Adrenal gland (tissue), 19 donors: ENCODE measurements at regions of chr3 and their contacts with region 1.

Region 1: DNA sequence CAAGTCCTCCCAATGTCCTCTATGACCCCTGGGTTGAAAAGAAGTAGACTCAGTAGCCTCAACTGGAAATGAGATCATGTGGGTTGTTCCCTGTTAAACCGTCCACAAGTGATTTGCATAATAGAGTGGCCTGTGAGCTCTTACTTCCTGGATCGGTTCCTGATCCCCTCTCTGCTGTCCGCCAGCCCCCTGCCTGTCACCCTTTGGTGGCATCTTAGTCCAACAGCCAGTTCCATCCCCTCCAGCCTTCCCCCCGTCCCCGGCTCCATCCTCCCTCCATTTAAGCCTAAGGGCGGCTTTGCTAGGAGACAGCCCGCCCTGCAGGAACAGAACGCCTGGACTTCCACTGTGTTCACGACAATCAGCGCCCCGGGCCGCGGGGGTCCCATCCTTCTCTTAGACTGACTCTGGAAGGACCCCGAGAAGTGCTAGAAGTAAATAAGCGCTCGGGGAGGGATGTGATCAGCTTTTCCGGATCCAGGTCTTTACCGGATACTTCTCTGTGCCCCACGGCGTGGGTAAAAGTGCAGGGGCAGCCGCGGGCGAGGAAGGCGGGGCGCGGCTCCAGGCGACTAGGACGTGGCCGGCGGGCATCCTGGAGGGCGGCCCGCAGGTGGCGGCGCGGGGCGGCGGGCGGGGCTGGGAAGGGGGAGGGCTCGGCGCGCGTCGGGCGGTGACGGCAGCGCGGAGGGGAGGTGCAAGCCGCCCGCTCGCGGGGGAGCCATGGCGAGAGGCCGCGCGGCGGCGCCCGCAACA is 51.2 kb upstream of the ULK4 start:
- DNase-seq: peak; percentile 53 to 78 (median 65)
- H3K4me3 ChIP-seq: peak overlapping the region in 2 of 4 donors; percentile 67 to 98
- H3K27ac ChIP-seq: peak overlapping the region in 4 of 5 donors; percentile 79 to 94 (median 83)
- H3K4me1 ChIP-seq: peaks cover 9 to 27% of the 10 kb centered on the region in 2 donors
- H3K27me3 ChIP-seq: no peaks in the 10 kb centered on the region
- CTCF ChIP-seq: no peak
- POLR2A ChIP-seq: peak; percentile 34 to 49

Region 2: GRCh38 chr3:41836360-41837134 is 176.6 kb before region 1 on chr3:
- intact Hi-C with region 1: no loop called
- DNase-seq: no peak
- H3K4me3 ChIP-seq: no peak overlapping the region
- H3K27ac ChIP-seq: no peak overlapping the region
- H3K4me1 ChIP-seq: no peaks in the 10 kb centered on the region
- H3K27me3 ChIP-seq: no peaks in the 10 kb centered on the region
- CTCF ChIP-seq: no peak
- POLR2A ChIP-seq: no peak

Region 3: GRCh38 chr3:41915353-41915752 is 97.8 kb before region 1 on chr3:
- intact Hi-C with region 1: loop called in 1 of 2 experiments (anchors 10 kb)
- DNase-seq: no peak
- H3K4me3 ChIP-seq: no peak overlapping the region
- H3K27ac ChIP-seq: no peak overlapping the region
- H3K4me1 ChIP-seq: no peaks in the 10 kb centered on the region
- H3K27me3 ChIP-seq: no peaks in the 10 kb centered on the region
- CTCF ChIP-seq: no peak
- POLR2A ChIP-seq: no peak

Region 4: GRCh38 chr3:41966206-41966605 is 46.9 kb before region 1 on chr3:
- intact Hi-C with region 1: loop called in 1 of 2 experiments (anchors 5 kb)
- DNase-seq: no peak
- H3K4me3 ChIP-seq: no peak overlapping the region
- H3K27ac ChIP-seq: no peak overlapping the region
- H3K4me1 ChIP-seq: peaks cover 0 to under 1% of the 10 kb centered on the region in 2 donors
- H3K27me3 ChIP-seq: no peaks in the 10 kb centered on the region
- CTCF ChIP-seq: no peak
- POLR2A ChIP-seq: no peak

Region 5: GRCh38 chr3:42090973-42091731 is 78.0 kb after region 1 on chr3 and contains the start of gene TRAK1:
- intact Hi-C with region 1: loop called in 1 of 2 experiments (anchors 10 kb)
- DNase-seq: peak in 6 of 7 donors; percentile 38 to 69 (median 59)
- H3K4me3 ChIP-seq: no peak within 1 kb of the TSS
- H3K27ac ChIP-seq: peak within 1 kb of the TSS in 3 of 5 donors; percentile 11 to 54 (median 27)
- H3K4me1 ChIP-seq: peaks cover 0 to 5% of the 10 kb centered on the region in 2 donors
- H3K27me3 ChIP-seq: no peaks in the 10 kb centered on the region
- CTCF ChIP-seq: peak in 1 of 6 experiments; percentile 12
- POLR2A ChIP-seq: no peak
- total RNA-seq, gene TRAK1: 24.6 to 38.1 (median 26.5) TPM

Region 6: GRCh38 chr3:42101048-42101447 is 87.9 kb after region 1 on chr3:
- intact Hi-C with region 1: loop called (anchors 5 to 10 kb)
- DNase-seq: peak in 6 of 7 donors; percentile 38 to 76 (median 62)
- H3K4me3 ChIP-seq: no peak overlapping the region
- H3K27ac ChIP-seq: peak overlapping the region in 3 of 5 donors; percentile 1 to 43 (median 3)
- H3K4me1 ChIP-seq: peaks cover 11 to 40% of the 10 kb centered on the region in 2 donors
- H3K27me3 ChIP-seq: no peaks in the 10 kb centered on the region
- CTCF ChIP-seq: no peak
- POLR2A ChIP-seq: no peak

Region 7: DNA sequence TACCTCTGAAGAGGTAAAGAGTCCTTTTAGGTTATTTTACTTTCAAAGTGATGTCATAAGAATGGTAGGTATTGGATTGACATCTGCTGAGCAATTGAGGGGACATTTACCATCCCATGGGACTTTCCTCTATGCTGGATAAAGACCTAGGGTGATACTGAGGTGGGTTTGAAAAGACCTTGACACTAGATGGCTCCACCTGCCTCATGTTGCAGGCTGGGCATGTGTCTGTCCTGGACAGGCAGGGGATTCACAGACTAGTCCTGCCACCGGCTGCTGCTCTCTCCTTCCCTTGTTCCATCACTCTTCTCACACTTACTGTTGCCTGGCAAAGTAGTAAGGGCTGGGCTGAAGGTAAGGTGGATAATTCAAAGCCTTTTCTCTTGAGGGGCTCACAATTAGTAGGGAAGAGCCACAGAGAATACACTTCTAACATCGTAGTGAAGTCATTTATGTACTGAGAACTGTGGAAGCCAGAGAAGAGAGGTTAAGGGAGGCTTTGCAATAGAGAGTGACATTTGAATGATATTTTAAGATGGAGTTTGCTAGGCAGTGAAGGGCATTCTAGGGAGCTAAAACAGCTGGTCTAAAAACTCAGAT is 105.7 kb after region 1 on chr3:
- intact Hi-C with region 1: no loop called
- DNase-seq: no peak
- H3K4me3 ChIP-seq: no peak overlapping the region
- H3K27ac ChIP-seq: no peak overlapping the region
- H3K4me1 ChIP-seq: peaks cover 5 to 23% of the 10 kb centered on the region in 2 donors
- H3K27me3 ChIP-seq: no peaks in the 10 kb centered on the region
- CTCF ChIP-seq: peak in 1 of 6 experiments; percentile 4
- POLR2A ChIP-seq: no peak